ENCODE measurements at regions of chr15 and their contacts with region 1.

Region 1: GRCh38 chr15:58260911-58261267 is 122.7 kb downstream of the AQP9 start:
- DNase-seq: peak; percentile 74 to 89
- ATAC-seq: peak; percentile 81 to 82
- H3K4me3 ChIP-seq: no peak overlapping the region
- H3K27ac ChIP-seq: peak overlapping the region; percentile 90 to 96 (median 94)
- H3K4me1 ChIP-seq: peaks cover 40 to 48% of the 10 kb centered on the region in 2 donors
- H3K27me3 ChIP-seq: no peaks in the 10 kb centered on the region
- CTCF ChIP-seq: peak in 1 of 5 experiments; percentile 0
- POLR2A ChIP-seq: no peak

Region 2: DNA sequence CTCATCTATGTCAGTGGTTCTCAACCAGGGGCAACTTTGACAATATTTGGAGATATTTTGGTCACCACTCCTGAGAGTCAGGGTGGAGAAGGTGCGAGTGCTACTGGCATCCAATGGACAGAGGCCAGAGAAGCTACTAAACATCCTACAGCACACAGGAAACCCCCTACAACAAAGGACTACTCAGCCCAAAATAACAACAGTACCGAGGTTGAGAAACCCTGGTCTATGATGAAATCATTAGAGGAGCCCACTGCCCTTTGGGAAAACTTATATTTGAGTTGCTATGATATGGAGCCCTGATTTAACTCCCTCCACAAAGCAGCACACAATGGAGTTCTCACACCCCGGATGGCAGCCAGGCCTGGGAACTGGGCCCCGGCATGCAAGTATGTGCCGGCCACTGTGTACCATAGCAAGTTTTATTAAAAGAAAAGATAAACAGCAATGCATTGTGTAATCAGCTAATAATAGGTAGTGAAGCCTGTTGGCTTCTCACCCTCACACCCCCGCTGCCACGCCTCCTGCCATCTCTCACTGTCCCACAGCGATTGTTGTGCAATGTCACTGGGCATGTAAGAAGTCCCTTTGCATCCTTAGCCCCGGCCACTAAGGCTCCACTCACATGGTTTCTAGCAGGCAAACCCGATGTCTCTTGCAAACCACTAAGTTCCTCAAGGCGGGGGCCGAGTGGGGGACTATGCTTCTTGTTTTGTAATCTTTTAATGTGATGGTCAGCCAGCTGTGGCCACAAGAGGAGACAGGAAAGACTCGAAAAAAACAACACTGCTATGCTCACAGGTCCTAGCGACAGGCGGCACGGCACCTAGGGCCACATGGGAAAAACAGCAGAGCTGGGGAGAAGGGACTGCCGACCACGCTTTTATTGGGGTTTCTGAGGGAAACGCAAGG is 12.8 kb before region 1 on chr15:
- in situ Hi-C with region 1: no loop called
- intact Hi-C with region 1: loop called (anchors 1 kb)
- DNase-seq: peak; percentile 96 to 97
- ATAC-seq: peak; percentile 90 to 97
- H3K4me3 ChIP-seq: peak overlapping the region in 1 of 4 donors; percentile 11
- H3K27ac ChIP-seq: peak overlapping the region; percentile 88 to 97 (median 91)
- H3K4me1 ChIP-seq: peaks cover 43% of the 10 kb centered on the region in 2 donors
- H3K27me3 ChIP-seq: no peaks in the 10 kb centered on the region
- CTCF ChIP-seq: no peak
- POLR2A ChIP-seq: peak; percentile 54 to 68

Region 3: GRCh38 chr15:58506064-58506490 is 245.2 kb after region 1 on chr15:
- in situ Hi-C with region 1: no loop called
- intact Hi-C with region 1: loop called (anchors 5 kb)
- DNase-seq: peak; percentile 88 to 90
- ATAC-seq: peak; percentile 92 to 94
- H3K4me3 ChIP-seq: no peak overlapping the region
- H3K27ac ChIP-seq: peak overlapping the region; percentile 71 to 82 (median 80)
- H3K4me1 ChIP-seq: peaks cover 19 to 27% of the 10 kb centered on the region in 2 donors
- H3K27me3 ChIP-seq: no peaks in the 10 kb centered on the region
- CTCF ChIP-seq: no peak
- POLR2A ChIP-seq: peak in 1 of 2 donors; percentile 5

Region 4: DNA sequence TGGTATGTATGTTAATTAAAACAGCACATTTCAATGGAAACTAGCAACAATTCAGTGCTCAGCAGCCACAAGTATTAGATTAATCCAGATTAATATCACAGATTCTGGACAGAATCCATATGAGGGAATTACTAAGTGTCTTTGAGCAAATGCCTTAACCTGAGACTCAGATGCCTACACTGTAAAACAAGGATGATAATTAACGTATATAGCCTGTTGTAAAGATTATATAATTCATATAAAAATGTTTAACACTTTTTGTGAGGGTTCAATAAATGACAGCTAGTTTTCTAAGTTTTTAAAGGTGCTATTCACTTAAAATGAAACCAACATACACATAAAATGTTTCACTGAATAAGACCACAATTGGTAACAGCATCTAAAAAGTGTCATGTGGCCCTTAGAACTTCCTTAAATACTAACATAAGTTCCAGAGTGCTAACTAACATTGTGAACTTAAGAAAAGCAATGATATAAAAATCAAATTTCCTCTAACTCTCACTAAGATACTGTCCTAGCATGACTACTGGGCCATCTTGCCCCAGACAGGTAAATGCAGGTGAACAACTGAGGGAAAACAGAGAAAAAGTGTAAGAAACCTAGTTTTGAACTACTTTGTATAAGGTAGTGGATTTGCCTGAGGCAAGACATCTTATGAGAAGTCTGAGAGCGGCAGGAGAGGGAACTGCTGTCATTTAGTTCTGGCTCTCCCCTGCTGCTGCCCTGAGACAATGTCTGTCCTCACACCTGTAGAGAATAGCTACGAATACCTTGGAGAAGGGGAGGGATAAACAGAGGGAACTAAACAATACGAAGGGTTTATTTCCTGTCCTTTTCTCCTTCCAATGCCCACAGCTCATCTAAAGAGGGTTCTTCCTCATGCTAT is 337.3 kb after region 1 on chr15:
- in situ Hi-C with region 1: no loop called
- intact Hi-C with region 1: no loop called
- DNase-seq: no peak
- ATAC-seq: no peak
- H3K4me3 ChIP-seq: no peak overlapping the region
- H3K27ac ChIP-seq: no peak overlapping the region
- H3K4me1 ChIP-seq: no peaks in the 10 kb centered on the region
- H3K27me3 ChIP-seq: no peaks in the 10 kb centered on the region
- CTCF ChIP-seq: no peak
- POLR2A ChIP-seq: no peak